ENCODE measurements at regions of chr5 and their contacts with region 1.

Region 1: GRCh38 chr5:180810210-180810958 is 7.8 kb upstream of the MGAT1 start:
- DNase-seq: peak; percentile 98
- H3K4me3 Mint-ChIP-seq: peak overlapping the region; percentile 78
- H3K27ac Mint-ChIP-seq: peak overlapping the region; percentile 99
- H3K4me1 Mint-ChIP-seq: peaks cover 63% of the 10 kb centered on the region
- H3K27me3 Mint-ChIP-seq: no peaks in the 10 kb centered on the region

Region 2: DNA sequence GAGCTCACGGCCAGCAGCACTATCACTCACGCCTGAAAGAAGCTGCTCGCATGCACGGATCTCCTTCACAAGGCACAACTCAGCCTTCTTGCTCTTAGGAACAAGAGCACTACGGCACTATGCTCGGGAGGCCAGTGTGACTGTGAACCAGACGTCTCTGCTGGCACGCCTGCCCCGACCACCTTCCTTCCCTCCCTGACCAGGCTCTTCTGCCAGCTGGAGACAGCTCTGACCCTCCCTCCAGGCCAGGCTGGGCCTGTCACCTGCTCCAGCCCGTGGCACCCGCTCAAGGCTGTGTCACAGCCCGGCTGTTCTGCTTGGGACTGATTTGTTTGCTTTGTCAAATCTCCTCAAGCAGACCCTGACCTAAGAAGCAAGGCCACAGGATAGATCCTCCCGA is 909.7 kb before region 1 on chr5:
- intact Hi-C with region 1: no loop called
- DNase-seq: no peak
- H3K4me3 Mint-ChIP-seq: no peak overlapping the region
- H3K27ac Mint-ChIP-seq: no peak overlapping the region
- H3K4me1 Mint-ChIP-seq: peaks cover 5% of the 10 kb centered on the region
- H3K27me3 Mint-ChIP-seq: no peaks in the 10 kb centered on the region

Region 3: GRCh38 chr5:180494060-180494509 is 316.3 kb before region 1 on chr5 and contains the start of gene CNOT6:
- intact Hi-C with region 1: loop called (anchors 10 kb)
- DNase-seq: peak; percentile 98
- H3K4me3 Mint-ChIP-seq: peak within 1 kb of the TSS; percentile 89
- H3K27ac Mint-ChIP-seq: peak within 1 kb of the TSS; percentile 91
- H3K4me1 Mint-ChIP-seq: peaks cover 29% of the 10 kb centered on the region
- H3K27me3 Mint-ChIP-seq: no peaks in the 10 kb centered on the region
- total RNA-seq, gene CNOT6: 45.3 and 51.6 TPM in 2 replicates

Region 4: GRCh38 chr5:180831139-180832048 is 21.0 kb after region 1 on chr5:
- intact Hi-C with region 1: loop called (anchors 1 kb)
- DNase-seq: peak; percentile 94
- H3K4me3 Mint-ChIP-seq: peak overlapping the region; percentile 93
- H3K27ac Mint-ChIP-seq: peak overlapping the region; percentile 99
- H3K4me1 Mint-ChIP-seq: peaks cover 33% of the 10 kb centered on the region
- H3K27me3 Mint-ChIP-seq: no peaks in the 10 kb centered on the region

Region 5: DNA sequence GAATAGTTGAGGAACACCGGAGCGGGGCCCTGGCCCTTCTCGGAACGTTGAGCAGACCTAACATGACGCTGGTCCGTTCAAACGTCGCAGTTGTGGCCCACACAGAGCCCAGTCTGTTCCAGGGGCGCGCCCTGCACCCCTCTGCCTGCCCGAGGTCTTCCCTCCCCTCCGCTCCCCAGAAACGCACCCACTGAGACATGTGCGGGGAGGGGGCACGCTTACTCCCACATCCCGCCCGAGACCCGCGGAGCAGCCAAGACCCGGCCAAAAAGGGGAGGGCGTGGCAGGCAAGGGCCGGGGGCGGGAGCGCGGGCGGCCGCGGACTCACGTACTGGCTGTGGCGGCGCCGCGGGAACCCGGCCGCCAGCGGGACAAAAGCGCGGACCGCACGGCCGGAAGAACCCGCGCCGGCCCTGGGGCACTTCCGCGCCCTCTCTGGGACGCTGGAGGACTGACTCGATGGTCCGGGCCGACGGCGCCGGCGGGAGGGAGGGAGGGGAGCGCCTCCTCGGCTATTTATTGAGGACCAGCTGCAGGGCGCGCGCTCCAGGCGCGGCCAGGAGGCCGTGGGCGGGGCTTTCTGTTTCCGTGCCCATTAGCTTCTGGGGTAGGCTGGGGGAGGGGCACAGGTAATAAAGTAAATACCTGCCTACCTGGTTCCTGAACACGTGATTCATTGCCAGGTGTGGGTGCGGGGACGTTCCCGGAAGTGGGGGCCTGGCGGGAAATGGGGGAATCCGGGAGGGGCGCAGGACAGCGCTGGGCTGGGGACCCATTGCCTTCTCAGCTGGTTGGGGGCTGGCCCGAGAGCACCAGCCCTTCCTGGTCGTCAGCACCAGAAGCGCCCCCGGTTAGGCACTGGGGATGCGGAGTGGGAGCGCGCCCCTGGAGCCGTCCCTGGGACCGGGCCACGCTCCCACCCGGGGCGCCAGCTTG is 50.8 kb after region 1 on chr5 and contains the start of gene ZFP62:
- intact Hi-C with region 1: loop called (anchors 1 kb)
- DNase-seq: peak; percentile 96
- H3K4me3 Mint-ChIP-seq: peak within 1 kb of the TSS; percentile 91
- H3K27ac Mint-ChIP-seq: peak within 1 kb of the TSS; percentile 94
- H3K4me1 Mint-ChIP-seq: peaks cover 15% of the 10 kb centered on the region
- H3K27me3 Mint-ChIP-seq: peaks cover 6% of the 10 kb centered on the region
- total RNA-seq, gene ZFP62: 26.7 and 28.0 TPM in 2 replicates

Region 6: GRCh38 chr5:181181650-181182565 is 371.5 kb after region 1 on chr5:
- intact Hi-C with region 1: loop called (anchors 10 kb)
- DNase-seq: peak; percentile 89
- H3K4me3 Mint-ChIP-seq: no peak overlapping the region
- H3K27ac Mint-ChIP-seq: peak overlapping the region; percentile 2
- H3K4me1 Mint-ChIP-seq: peaks cover 25% of the 10 kb centered on the region
- H3K27me3 Mint-ChIP-seq: peaks cover 9% of the 10 kb centered on the region

Region 7: DNA sequence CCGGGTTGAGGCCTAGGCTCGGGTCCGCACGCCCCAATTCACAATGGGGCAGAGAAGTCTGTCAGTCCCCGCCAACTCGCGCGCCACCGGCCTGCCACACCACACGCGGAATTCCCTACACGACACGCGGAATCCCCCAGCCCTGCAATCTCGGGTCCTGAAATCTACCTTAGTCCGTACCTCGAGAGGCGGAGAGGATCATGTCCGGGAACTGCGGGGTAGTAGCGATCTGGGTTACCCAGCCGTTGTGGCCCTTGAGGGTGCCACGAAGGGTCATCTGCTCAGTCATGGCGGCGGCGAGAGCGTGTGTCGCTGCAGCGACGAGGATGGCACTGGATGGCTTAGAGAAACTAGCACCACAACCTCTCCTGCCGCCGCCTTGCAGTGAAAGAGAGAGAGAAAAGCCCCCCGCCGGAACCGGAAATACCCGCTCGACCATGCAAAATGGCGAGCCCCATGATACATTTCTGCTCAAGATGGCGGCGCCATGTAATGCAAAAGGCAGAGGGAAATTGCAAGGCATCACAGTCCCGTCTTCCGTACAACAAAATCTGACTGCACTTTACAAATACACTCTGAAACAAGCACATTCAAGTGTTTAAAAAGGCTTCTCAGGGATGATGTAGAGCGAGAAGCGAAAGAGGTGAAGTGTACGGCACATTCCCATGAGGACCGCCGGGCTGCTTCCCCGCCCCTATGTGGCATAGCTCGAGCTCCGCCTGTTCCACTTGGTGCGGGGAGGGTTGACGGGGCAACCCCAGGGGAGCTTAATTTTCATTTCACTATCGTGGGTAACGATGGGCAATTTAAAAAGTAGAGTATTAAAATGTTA is 433.3 kb after region 1 on chr5 and contains the start of gene RACK1:
- intact Hi-C with region 1: loop called (anchors 2 kb)
- DNase-seq: peak; percentile 96
- H3K4me3 Mint-ChIP-seq: peak within 1 kb of the TSS; percentile 98
- H3K27ac Mint-ChIP-seq: peak within 1 kb of the TSS; percentile 99
- H3K4me1 Mint-ChIP-seq: peaks cover 49% of the 10 kb centered on the region
- H3K27me3 Mint-ChIP-seq: no peaks in the 10 kb centered on the region
- total RNA-seq, gene RACK1: 2,172 and 2,196 TPM in 2 replicates

Measured in activated CD4-positive, alpha-beta T cell treated with anti-CD3 and anti-CD28 coated beads, Interleukin-2, amount 10 ng/mL, durations not matched to agents 24 days and 14 days (primary cell).